GM12878 (cell line): ENCODE measurements at regions of chr1 and their contacts with region 1.

Region 1: DNA sequence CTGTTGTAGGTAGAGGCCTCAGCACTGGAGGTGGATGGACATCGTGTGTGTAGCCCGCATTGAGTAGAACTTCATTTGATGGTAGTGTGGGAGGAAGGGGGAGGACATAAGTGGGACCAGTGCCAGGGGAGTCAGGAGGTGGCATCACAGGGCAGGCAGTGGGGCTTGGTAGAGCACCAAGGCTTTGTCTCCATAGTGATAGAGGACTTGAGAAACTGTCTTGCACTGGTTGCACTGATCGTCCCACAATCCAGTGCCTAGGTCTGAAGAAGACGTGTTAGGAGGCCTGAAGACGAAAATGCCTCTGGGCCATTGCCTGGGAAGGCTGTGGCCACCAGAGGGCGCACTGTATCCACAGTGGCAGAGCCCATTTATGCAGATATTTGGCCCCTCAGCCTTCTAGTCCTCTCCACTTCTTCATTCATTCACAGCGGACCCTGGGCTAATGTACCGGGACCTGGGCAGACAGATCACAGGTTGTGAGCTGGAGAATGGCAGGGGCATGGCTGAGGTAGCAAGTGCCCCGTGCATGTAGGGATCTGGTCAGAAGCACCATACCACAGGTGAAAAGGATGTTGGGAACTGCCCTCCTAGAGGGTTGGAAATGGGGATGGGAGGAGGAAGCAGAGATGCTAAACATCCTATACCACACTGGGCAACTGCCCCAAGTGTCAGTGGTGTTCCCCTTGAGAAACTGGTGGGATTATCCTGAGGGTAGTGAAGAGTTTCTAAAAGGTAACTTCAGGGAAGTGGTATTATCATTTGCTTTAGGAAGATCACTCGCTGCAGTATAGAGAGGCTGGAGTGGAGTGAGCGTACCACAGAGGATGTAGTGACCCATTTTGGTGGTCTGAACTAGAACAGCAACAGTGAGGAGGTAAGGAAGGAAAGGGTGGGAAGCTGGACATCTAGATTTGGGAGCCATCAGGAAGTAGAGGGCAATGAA is 95.3 kb downstream of the PIK3R3 start:
- DNase-seq: peak; percentile 53
- ATAC-seq: peak; percentile 91
- H3K4me3 ChIP-seq: no peak overlapping the region
- H3K27ac ChIP-seq: no peak overlapping the region
- H3K4me1 ChIP-seq: peaks cover 13% of the 10 kb centered on the region
- H3K27me3 ChIP-seq: no peaks in the 10 kb centered on the region
- CTCF ChIP-seq: peak; percentile 97 to 98 (median 98); a peak in 5 of 6 replicates
- EP300 ChIP-seq: no peak
- POLR2A ChIP-seq: peak; percentile 30; the same call in 1 of the 2 replicates
- RAD21 ChIP-seq: peak; percentile 100

Region 2: GRCh38 chr1:46021046-46021996 is 15.8 kb before region 1 on chr1:
- CTCF ChIA-PET with region 1: interaction called, 11 read pairs
- POLR2A ChIA-PET with region 1: no interaction called
- RAD21 ChIA-PET with region 1: interaction called, 3 read pairs
- SMC1A ChIA-PET with region 1: interaction called, 4 read pairs
- in situ Hi-C with region 1: no loop called
- intact Hi-C with region 1: no loop called
- DNase-seq: no peak
- ATAC-seq: no peak
- H3K4me3 ChIP-seq: no peak overlapping the region
- H3K27ac ChIP-seq: no peak overlapping the region
- H3K4me1 ChIP-seq: no peaks in the 10 kb centered on the region
- H3K27me3 ChIP-seq: no peaks in the 10 kb centered on the region
- CTCF ChIP-seq: no peak
- EP300 ChIP-seq: no peak
- POLR2A ChIP-seq: no peak
- RAD21 ChIP-seq: no peak

Region 3: DNA sequence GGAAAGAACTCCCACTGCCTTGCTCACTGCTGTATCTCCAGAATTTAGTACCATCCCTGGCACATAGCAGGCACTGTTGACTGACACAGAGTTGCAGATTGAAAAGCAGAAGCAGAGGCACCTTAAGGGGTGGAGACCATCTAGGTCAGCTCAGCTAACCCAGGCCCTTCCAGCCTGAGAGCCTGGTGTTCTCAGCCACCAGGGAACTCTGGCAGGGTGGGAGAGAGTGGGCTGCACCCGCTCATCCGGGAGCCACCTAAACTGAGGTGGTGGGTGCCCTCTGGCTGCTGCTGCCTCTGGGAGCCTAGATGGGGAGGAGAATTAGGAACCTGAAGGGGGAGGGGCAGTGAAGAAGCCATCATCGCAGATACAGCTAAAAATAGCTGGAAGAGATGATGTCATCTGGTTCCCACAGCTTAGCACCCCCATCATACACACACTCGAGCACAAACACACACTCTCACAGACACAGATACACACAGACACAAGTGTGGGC is 136.2 kb after region 1 on chr1:
- CTCF ChIA-PET with region 1: interaction called, 293 read pairs
- POLR2A ChIA-PET with region 1: no interaction called
- RAD21 ChIA-PET with region 1: interaction called, 9 read pairs
- SMC1A ChIA-PET with region 1: interaction called, 50 read pairs
- in situ Hi-C with region 1: loop called (anchors 5 kb)
- intact Hi-C with region 1: no loop called
- DNase-seq: no peak
- ATAC-seq: peak; percentile 51
- H3K4me3 ChIP-seq: no peak overlapping the region
- H3K27ac ChIP-seq: no peak overlapping the region
- H3K4me1 ChIP-seq: peaks cover 3% of the 10 kb centered on the region
- H3K27me3 ChIP-seq: no peaks in the 10 kb centered on the region; a peak in 1 of 4 replicates
- CTCF ChIP-seq: peak in 1 of 3 experiments; percentile 18; a peak in 1 of 6 replicates
- EP300 ChIP-seq: no peak
- POLR2A ChIP-seq: no peak
- RAD21 ChIP-seq: no peak

Region 4: GRCh38 chr1:46179138-46180081 is 142.2 kb after region 1 on chr1:
- CTCF ChIA-PET with region 1: interaction called, 293 read pairs
- POLR2A ChIA-PET with region 1: interaction called, 3 read pairs
- RAD21 ChIA-PET with region 1: interaction called, 29 read pairs
- SMC1A ChIA-PET with region 1: interaction called, 52 read pairs
- in situ Hi-C with region 1: loop called (anchors 5 kb)
- intact Hi-C with region 1: loop called (anchors 1 kb)
- DNase-seq: no peak
- ATAC-seq: peak; percentile 88
- H3K4me3 ChIP-seq: no peak overlapping the region
- H3K27ac ChIP-seq: no peak overlapping the region
- H3K4me1 ChIP-seq: peaks cover 18% of the 10 kb centered on the region
- H3K27me3 ChIP-seq: no peaks in the 10 kb centered on the region
- CTCF ChIP-seq: peak; percentile 88 to 94 (median 91); a peak in 5 of 6 replicates
- EP300 ChIP-seq: no peak
- POLR2A ChIP-seq: no peak
- RAD21 ChIP-seq: peak; percentile 99

Region 5: GRCh38 chr1:46197964-46198811 is 161.0 kb after region 1 on chr1 and contains the start of gene POMGNT1:
- CTCF ChIA-PET with region 1: interaction called, 3 read pairs
- POLR2A ChIA-PET with region 1: no interaction called
- RAD21 ChIA-PET with region 1: interaction called, 5 read pairs
- SMC1A ChIA-PET with region 1: interaction called, 3 read pairs
- in situ Hi-C with region 1: no loop called
- intact Hi-C with region 1: loop called (anchors 1 kb)
- DNase-seq: no peak
- ATAC-seq: peak; percentile 94
- H3K4me3 ChIP-seq: peak within 1 kb of the TSS; percentile 98
- H3K27ac ChIP-seq: peak within 1 kb of the TSS; percentile 59
- H3K4me1 ChIP-seq: peaks cover 9% of the 10 kb centered on the region
- H3K27me3 ChIP-seq: no peaks in the 10 kb centered on the region
- CTCF ChIP-seq: peak in 2 of 3 experiments; percentile 20 to 21; a peak in 2 of 6 replicates
- EP300 ChIP-seq: no peak
- POLR2A ChIP-seq: peak; percentile 93
- RAD21 ChIP-seq: peak; percentile 28; the same call in 1 of the 2 replicates
- polyA plus RNA-seq, gene POMGNT1: 8.6 to 29.0 TPM

Region 6: GRCh38 chr1:46724991-46725735 is 688.0 kb after region 1 on chr1:
- CTCF ChIA-PET with region 1: no interaction called
- POLR2A ChIA-PET with region 1: no interaction called
- RAD21 ChIA-PET with region 1: no interaction called
- SMC1A ChIA-PET with region 1: no interaction called
- in situ Hi-C with region 1: no loop called
- intact Hi-C with region 1: no loop called
- DNase-seq: peak; percentile 16
- ATAC-seq: peak; percentile 100
- H3K4me3 ChIP-seq: no peak overlapping the region
- H3K27ac ChIP-seq: no peak overlapping the region
- H3K4me1 ChIP-seq: no peaks in the 10 kb centered on the region
- H3K27me3 ChIP-seq: no peaks in the 10 kb centered on the region; a peak in 2 of 4 replicates
- CTCF ChIP-seq: peak; percentile 84 to 91 (median 85)
- EP300 ChIP-seq: no peak
- POLR2A ChIP-seq: no peak
- RAD21 ChIP-seq: peak; percentile 88